ENCODE measurements at regions of chr3 and their contacts with region 1.

Region 1: GRCh38 chr3:12948891-12949711 is 107.7 kb upstream of the RPL32 start:
- DNase-seq: peak in 1 of 2 donors; percentile 46
- ATAC-seq: peak; percentile 81 to 90 (median 82)
- H3K4me3 ChIP-seq: no peak overlapping the region
- H3K4me3 Mint-ChIP-seq: peak overlapping the region; percentile 77
- H3K27ac ChIP-seq: peak overlapping the region; percentile 1
- H3K27ac Mint-ChIP-seq: peak overlapping the region; percentile 48 to 81
- H3K4me1 ChIP-seq: peaks cover 82% of the 10 kb centered on the region
- H3K4me1 Mint-ChIP-seq: peaks cover 65 to 83% of the 10 kb centered on the region in 2 donors
- H3K27me3 ChIP-seq: no peaks in the 10 kb centered on the region
- H3K27me3 Mint-ChIP-seq: no peaks in the 10 kb centered on the region
- CTCF ChIP-seq: no peak

Region 2: GRCh38 chr3:12916159-12916558 is 32.9 kb before region 1 on chr3:
- intact Hi-C with region 1: loop called (anchors 1 kb)
- DNase-seq: peak; percentile 64 to 73
- ATAC-seq: peak; percentile 92 to 95 (median 92)
- H3K4me3 ChIP-seq: no peak overlapping the region
- H3K4me3 Mint-ChIP-seq: peak overlapping the region; percentile 76
- H3K27ac ChIP-seq: peak overlapping the region; percentile 52
- H3K27ac Mint-ChIP-seq: peak overlapping the region; percentile 78 to 81
- H3K4me1 ChIP-seq: peaks cover 40% of the 10 kb centered on the region
- H3K4me1 Mint-ChIP-seq: peaks cover 38 to 39% of the 10 kb centered on the region in 2 donors
- H3K27me3 ChIP-seq: no peaks in the 10 kb centered on the region
- H3K27me3 Mint-ChIP-seq: no peaks in the 10 kb centered on the region
- CTCF ChIP-seq: no peak